Posterior vena cava (tissue), 2 donors: ENCODE measurements at regions of chr10 and their contacts with region 1.

Region 1: GRCh38 chr10:133124357-133125211 is 35.4 kb upstream of the KNDC1 start:
- DNase-seq: peak; percentile 79

Region 2: GRCh38 chr10:132939957-132940790 is 184.4 kb before region 1 on chr10:
- intact Hi-C with region 1: loop called (anchors 5 to 10 kb)
- DNase-seq: peak; percentile 85

Region 3: DNA sequence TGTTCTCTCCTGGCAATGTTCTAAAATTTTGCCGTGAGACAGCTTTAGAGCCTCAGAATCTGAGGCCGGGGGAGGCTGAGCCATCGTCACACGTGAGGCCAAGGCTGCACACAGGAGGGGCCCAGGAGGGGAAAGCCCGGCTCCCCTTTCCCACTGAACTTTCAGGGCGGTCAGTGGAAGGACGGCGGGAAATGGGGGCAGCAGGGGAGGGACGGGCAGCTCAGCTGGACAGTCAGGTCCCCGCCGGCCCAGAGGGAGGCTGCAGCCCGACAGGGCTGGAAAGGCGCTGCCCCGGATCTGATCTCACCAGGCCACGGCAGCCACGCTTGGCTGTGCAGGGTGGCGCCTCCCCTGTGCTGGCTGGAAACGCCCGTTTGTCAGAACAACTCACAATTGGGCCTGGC is 80.2 kb before region 1 on chr10:
- intact Hi-C with region 1: no loop called
- DNase-seq: no peak

Region 4: GRCh38 chr10:133096616-133097269 is 27.8 kb before region 1 on chr10:
- intact Hi-C with region 1: loop called in 1 of 2 experiments (anchors 1 kb)
- DNase-seq: no peak

Region 5: DNA sequence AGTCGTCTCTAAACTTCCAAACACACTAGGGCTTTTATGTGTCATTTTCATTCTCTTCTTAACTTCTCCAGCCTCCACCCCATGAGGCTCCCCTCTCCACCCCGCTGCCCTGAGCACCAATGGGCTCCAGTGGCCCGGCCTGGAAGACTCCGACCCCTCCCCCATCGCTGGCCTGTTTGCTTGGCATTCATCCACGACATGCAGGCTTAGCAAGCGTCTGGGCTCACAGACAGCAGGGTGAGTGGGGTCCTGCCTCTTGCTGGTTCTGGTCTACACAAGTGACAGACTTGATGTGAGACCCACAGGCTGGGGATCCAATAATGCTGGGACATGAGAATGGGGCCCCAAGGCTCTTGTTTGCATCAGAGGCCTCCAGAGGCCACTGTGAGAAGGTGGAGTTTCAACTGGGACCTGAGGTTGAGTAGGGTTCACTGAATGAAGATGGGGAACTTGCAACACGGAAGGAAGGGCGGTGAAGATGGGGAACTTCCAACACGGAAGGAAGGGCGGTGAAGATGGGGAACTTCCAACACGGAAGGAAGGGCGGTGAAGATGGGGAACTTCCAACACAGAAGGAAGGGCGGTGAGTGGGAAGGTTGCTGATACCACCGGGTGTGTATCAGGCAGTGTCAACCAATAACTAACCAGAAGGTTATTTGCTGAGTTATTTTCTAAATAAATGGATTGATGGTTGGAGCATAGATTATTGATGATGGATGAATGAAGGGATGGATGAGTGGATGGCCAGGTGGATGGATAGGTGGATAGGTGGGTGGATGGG is 49.5 kb after region 1 on chr10:
- intact Hi-C with region 1: no loop called
- DNase-seq: peak; percentile 41

Region 6: GRCh38 chr10:133309111-133309719 is 184.6 kb after region 1 on chr10:
- intact Hi-C with region 1: no loop called
- DNase-seq: peak; percentile 99